CD4-positive, alpha-beta T cell (primary cell): ENCODE measurements at regions of chr12 and their contacts with region 1.

Region 1: GRCh38 chr12:52980693-52981423 is 25.4 kb upstream of the EIF4B start:
- DNase-seq: peak; percentile 64 to 91 (median 76)
- ATAC-seq: peak; percentile 97
- H3K4me3 ChIP-seq: no peak overlapping the region
- H3K4me3 Mint-ChIP-seq: no peak overlapping the region
- H3K27ac ChIP-seq: no peak overlapping the region
- H3K27ac Mint-ChIP-seq: no peak overlapping the region
- H3K4me1 ChIP-seq: peaks cover 3% of the 10 kb centered on the region
- H3K4me1 Mint-ChIP-seq: no peaks in the 10 kb centered on the region
- H3K27me3 ChIP-seq: peaks cover 0 to 4% of the 10 kb centered on the region in 2 experiments
- H3K27me3 Mint-ChIP-seq: peaks cover 54% of the 10 kb centered on the region
- CTCF ChIP-seq: peak; percentile 99

Region 2: DNA sequence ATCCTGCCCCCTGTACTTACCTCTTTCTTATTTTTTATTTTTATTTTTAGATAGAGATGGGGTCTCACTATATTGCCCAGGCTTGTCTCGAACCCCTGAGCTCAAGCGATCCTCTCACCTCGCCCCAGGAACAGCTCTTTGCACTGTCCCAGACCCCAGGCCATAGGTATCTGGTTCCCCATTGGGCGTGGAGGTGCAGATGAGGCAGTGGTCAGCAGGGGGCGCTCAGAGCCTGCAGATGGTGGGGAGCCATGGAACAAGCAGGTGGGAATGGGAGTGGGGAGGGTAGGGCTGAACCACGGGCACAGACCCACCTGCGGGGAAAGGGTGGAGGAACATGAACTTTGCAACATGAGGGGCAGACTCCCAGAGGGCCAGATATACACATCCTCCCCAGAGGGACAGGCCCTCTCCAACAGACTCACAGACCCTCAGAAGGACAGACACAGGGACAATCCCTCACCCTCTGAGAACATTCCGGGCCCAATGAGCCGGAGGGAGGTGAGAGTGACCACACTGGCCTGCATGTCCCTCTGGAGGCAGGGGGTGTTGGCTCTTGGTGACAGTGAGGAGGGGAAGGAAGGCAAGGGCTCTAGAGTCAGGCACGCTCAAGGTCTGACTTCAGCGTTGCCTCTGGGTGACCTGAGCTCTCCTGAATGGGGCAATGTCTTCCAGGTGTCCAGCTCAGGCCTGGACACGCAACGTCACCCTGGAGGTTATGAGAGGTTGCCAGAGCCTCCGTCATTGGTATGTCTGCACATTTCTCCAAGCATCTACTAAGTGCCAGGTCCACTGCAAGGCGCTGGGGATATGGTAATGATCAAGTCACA is 823.9 kb before region 1 on chr12:
- CTCF ChIA-PET with region 1: no interaction called
- POLR2A ChIA-PET with region 1: no interaction called
- intact Hi-C with region 1: loop called (anchors 2 kb)
- DNase-seq: peak; percentile 57 to 84 (median 70)
- ATAC-seq: peak; percentile 26
- H3K4me3 ChIP-seq: no peak overlapping the region
- H3K4me3 Mint-ChIP-seq: no peak overlapping the region
- H3K27ac ChIP-seq: no peak overlapping the region
- H3K27ac Mint-ChIP-seq: peak overlapping the region; percentile 1
- H3K4me1 ChIP-seq: peaks cover 65% of the 10 kb centered on the region
- H3K4me1 Mint-ChIP-seq: peaks cover 42% of the 10 kb centered on the region
- H3K27me3 ChIP-seq: no peaks in the 10 kb centered on the region
- H3K27me3 Mint-ChIP-seq: no peaks in the 10 kb centered on the region
- CTCF ChIP-seq: peak; percentile 90

Region 3: GRCh38 chr12:52372216-52373154 is 608.4 kb before region 1 on chr12:
- CTCF ChIA-PET with region 1: interaction called, 3 read pairs
- POLR2A ChIA-PET with region 1: no interaction called
- intact Hi-C with region 1: loop called (anchors 1 to 2 kb)
- DNase-seq: peak; percentile 14 to 71 (median 46)
- ATAC-seq: no peak
- H3K4me3 ChIP-seq: no peak overlapping the region
- H3K4me3 Mint-ChIP-seq: no peak overlapping the region
- H3K27ac ChIP-seq: no peak overlapping the region
- H3K27ac Mint-ChIP-seq: no peak overlapping the region
- H3K4me1 ChIP-seq: no peaks in the 10 kb centered on the region
- H3K4me1 Mint-ChIP-seq: no peaks in the 10 kb centered on the region
- H3K27me3 ChIP-seq: peaks cover 2 to 4% of the 10 kb centered on the region in 2 experiments
- H3K27me3 Mint-ChIP-seq: peaks cover 24% of the 10 kb centered on the region
- CTCF ChIP-seq: peak; percentile 53

Region 4: GRCh38 chr12:52884526-52885293 is 96.1 kb before region 1 on chr12:
- CTCF ChIA-PET with region 1: interaction called, 53 read pairs
- POLR2A ChIA-PET with region 1: interaction called, 11 read pairs
- intact Hi-C with region 1: loop called (anchors 1 kb)
- DNase-seq: peak; percentile 67 to 88 (median 76)
- ATAC-seq: peak; percentile 83
- H3K4me3 ChIP-seq: no peak overlapping the region
- H3K4me3 Mint-ChIP-seq: no peak overlapping the region
- H3K27ac ChIP-seq: no peak overlapping the region
- H3K27ac Mint-ChIP-seq: no peak overlapping the region
- H3K4me1 ChIP-seq: peaks cover 6% of the 10 kb centered on the region
- H3K4me1 Mint-ChIP-seq: peaks cover 6% of the 10 kb centered on the region
- H3K27me3 ChIP-seq: peaks cover 0 to 6% of the 10 kb centered on the region in 2 experiments
- H3K27me3 Mint-ChIP-seq: peaks cover 10% of the 10 kb centered on the region
- CTCF ChIP-seq: peak; percentile 95